AG04450 (cell line): ENCODE measurements at regions of chr1 and their contacts with region 1.

Region 1: DNA sequence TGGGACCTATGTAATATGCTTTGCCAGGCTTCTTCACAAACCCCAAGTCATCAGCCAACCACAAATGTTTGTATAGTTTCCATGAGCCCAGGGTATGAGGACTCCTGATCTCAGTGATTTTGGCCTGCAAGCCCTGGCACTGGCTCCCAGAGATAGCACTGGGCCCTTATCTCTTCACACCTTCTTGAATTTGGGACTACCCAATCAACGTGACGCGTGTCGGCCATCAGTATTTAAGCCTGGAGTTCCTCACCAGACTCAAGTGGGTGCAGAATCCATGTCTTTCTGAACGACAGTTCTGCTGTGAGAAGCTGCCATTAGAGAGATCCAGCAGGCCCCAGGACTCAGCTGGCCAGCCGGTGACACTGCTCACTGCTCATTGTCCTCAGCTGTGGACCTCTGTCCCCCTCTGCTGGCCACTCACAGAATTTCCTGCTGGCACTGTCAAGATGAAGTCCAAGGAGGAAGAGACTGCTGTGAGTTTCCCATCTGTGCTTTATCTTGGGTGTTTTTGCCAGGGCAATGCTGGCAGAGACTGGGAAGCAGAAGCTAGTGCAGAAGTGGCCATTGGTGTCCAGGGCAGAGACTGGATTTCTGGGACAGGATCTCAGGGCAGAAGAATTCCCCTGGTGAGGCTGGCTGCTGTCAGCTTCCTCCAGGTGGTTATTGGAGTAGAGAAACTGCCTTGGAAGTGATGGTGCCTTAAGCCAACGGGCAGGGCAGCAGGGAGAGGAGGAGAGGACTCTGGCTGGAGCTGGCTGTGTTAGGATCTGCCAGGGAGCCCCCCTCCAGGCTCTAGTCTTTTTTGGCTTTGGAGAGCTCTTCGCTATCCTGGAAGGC is 28.4 kb downstream of the TMCC2 start:
- DNase-seq: peak; percentile 59
- H3K4me3 ChIP-seq: no peak overlapping the region
- H3K27ac ChIP-seq: no peak overlapping the region
- H3K27me3 ChIP-seq: no peaks in the 10 kb centered on the region
- CTCF ChIP-seq: peak; percentile 97

Region 2: DNA sequence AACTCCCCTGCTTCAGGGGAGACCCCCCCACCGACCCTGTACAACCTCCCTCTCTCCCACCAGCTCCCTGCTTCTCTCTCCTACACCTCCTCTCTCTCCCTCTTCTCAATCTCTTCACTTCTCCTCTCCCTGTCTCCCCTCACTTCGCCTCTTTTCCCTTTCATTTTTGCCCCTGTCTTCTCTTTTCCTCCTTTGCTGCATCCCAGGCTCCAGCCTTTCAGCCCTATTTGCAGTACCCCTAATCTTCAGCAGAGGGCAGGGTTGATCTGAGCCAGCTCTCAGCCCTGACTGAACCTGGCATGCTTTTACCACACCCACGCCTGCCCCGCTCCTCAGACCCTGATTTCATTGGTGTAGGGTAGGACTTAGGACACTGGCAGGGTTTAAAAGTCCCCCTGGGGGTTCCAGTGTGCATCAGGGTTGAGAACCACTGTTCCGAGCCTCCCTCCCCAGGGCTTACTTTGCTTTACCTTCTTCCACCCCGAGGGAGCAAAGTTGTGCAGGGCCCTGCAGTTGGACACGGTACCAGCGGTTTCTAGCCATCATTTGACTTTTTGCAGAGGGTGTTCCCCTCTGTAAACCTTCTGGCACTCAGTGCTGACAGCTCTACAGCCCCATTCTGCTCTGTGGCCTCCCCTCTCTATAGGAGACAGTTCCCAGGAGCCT is 280.5 kb before region 1 on chr1:
- CTCF ChIA-PET with region 1: interaction called, 39 read pairs
- POLR2A ChIA-PET with region 1: interaction called, 3 read pairs
- DNase-seq: no peak
- H3K4me3 ChIP-seq: no peak overlapping the region
- H3K27ac ChIP-seq: no peak overlapping the region
- H3K27me3 ChIP-seq: peaks cover 7% of the 10 kb centered on the region
- CTCF ChIP-seq: peak; percentile 90

Region 3: GRCh38 chr1:205091043-205091740 is 165.0 kb before region 1 on chr1:
- CTCF ChIA-PET with region 1: interaction called, 11 read pairs
- POLR2A ChIA-PET with region 1: no interaction called
- DNase-seq: no peak
- H3K4me3 ChIP-seq: no peak overlapping the region
- H3K27ac ChIP-seq: no peak overlapping the region
- H3K27me3 ChIP-seq: no peaks in the 10 kb centered on the region
- CTCF ChIP-seq: no peak

Region 4: DNA sequence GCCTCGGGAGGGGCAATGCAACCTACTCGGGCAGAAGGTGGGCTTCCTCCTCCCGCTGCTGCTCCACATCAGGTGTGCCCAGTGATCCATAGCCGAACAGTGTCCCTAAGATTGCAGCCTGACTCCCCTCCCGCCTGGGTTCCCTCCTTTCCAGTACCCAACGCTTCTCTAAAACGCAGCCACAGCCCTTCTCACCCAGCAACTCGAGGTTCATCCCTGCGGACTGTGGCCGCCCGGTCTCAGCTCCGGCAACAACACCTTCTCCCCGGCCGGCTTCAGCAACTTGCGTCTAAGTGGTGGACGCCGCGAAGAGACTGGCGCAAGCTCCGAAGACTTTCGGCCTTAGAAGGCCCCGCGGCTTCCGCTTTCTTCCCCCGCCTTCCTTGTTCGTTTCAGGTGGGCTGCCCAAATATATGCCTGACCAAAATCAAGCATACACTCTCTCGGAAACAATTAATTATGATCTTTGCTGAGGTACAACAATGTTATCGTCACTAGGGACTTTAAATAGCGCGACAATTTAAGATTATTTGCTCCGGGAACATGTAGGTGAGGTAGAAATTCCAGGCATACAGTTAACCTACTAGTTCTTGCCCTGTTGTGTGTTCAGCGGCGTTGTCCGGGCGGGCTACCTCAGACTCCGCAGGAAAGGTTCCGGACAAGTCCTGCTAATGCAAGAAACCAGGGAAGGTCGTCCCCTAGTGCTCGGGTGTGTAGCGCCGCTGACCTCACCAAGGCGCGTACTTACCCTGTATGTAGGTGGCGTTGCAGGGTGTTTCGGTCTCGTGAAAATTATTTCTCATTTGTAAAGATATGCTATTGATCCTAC is 134.3 kb before region 1 on chr1 and contains the start of gene RBBP5:
- CTCF ChIA-PET with region 1: interaction called, 39 read pairs
- POLR2A ChIA-PET with region 1: interaction called, 11 read pairs
- DNase-seq: peak; percentile 98
- H3K4me3 ChIP-seq: peak within 1 kb of the TSS; percentile 100
- H3K27ac ChIP-seq: peak within 1 kb of the TSS; percentile 78
- H3K27me3 ChIP-seq: no peaks in the 10 kb centered on the region
- CTCF ChIP-seq: peak; percentile 90
- polyA plus RNA-seq, gene RBBP5: 12.0 and 16.0 TPM in 2 replicates

Region 5: GRCh38 chr1:205227584-205228006 is 28.6 kb before region 1 on chr1 and contains the start of gene TMCC2:
- CTCF ChIA-PET with region 1: interaction called, 107 read pairs
- POLR2A ChIA-PET with region 1: interaction called, 3 read pairs
- DNase-seq: peak; percentile 66
- H3K4me3 ChIP-seq: peak within 1 kb of the TSS; percentile 75
- H3K27ac ChIP-seq: peak within 1 kb of the TSS; percentile 11
- H3K27me3 ChIP-seq: peaks cover 2% of the 10 kb centered on the region
- CTCF ChIP-seq: 0 out of 2 replicates have a peak, but pooled peaks have one; percentile 9
- polyA plus RNA-seq, gene TMCC2: 2.3 and 3.0 TPM in 2 replicates

Region 6: DNA sequence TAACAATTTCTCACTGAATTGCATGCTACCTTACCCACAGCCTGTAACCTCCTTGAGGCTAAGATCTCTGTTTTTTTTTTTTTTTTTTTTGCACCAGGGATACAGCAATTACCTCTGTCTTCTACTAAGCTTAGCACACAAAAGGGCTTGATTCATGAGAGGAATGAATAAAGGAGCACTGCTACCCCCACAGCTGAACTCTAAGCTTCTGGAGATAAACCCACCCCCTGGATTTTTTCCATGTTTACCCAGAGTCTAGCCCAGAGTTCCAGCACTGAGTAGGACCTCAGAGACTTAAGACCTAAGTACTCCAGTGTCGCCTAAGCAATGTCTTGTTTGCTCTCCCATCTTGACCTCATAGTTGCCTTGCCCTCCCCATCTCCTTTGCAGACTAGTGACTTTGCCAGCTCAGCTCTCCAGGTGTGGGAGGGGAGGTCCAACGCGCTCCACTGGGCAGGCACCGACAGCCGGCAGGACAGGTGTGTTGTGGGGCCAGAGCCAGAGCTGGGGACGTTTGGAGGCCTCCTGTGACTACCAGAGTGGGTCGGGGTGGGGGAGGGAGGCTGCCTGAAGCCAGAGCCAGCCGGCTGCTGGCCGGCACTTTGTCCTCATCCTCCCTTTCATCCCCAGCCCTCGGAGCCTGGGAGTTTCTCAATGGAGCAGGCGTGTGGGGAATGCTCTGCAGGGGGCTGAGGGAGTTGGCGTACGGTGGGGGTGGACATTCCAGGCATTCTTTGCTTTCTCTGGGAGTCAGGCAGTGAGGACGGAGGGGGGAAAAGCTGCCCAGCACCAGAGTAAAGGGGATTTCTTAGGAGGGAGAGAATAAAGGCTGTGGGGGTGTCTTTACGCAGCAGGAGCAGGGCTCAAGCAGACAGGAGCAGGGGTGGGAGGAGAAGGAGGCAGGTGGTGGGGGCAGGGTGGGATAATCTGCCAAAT is 45.0 kb after region 1 on chr1:
- CTCF ChIA-PET with region 1: no interaction called
- POLR2A ChIA-PET with region 1: no interaction called
- DNase-seq: peak; percentile 92
- H3K4me3 ChIP-seq: peak overlapping the region; percentile 25; the same call in 1 of the 2 replicates
- H3K27ac ChIP-seq: peak overlapping the region; percentile 100
- H3K27me3 ChIP-seq: no peaks in the 10 kb centered on the region
- CTCF ChIP-seq: no peak

Region 7: GRCh38 chr1:205321164-205321958 is 65.2 kb after region 1 on chr1 and contains the start of gene NUAK2:
- CTCF ChIA-PET with region 1: interaction called, 24 read pairs
- POLR2A ChIA-PET with region 1: no interaction called
- DNase-seq: peak; percentile 61
- H3K4me3 ChIP-seq: peak within 1 kb of the TSS; percentile 93
- H3K27ac ChIP-seq: peak within 1 kb of the TSS; percentile 80
- H3K27me3 ChIP-seq: peaks cover 4% of the 10 kb centered on the region
- CTCF ChIP-seq: peak; percentile 41
- polyA plus RNA-seq, gene NUAK2: 7.0 and 8.2 TPM in 2 replicates

Region 8: GRCh38 chr1:205458777-205459566 is 202.8 kb after region 1 on chr1:
- CTCF ChIA-PET with region 1: no interaction called
- POLR2A ChIA-PET with region 1: no interaction called
- DNase-seq: no peak
- H3K4me3 ChIP-seq: no peak overlapping the region
- H3K27ac ChIP-seq: no peak overlapping the region
- H3K27me3 ChIP-seq: peaks cover 61% of the 10 kb centered on the region
- CTCF ChIP-seq: no peak